Stomach (tissue), 19 donors: ENCODE measurements at regions of chr5 and their contacts with region 1.

Region 1: DNA sequence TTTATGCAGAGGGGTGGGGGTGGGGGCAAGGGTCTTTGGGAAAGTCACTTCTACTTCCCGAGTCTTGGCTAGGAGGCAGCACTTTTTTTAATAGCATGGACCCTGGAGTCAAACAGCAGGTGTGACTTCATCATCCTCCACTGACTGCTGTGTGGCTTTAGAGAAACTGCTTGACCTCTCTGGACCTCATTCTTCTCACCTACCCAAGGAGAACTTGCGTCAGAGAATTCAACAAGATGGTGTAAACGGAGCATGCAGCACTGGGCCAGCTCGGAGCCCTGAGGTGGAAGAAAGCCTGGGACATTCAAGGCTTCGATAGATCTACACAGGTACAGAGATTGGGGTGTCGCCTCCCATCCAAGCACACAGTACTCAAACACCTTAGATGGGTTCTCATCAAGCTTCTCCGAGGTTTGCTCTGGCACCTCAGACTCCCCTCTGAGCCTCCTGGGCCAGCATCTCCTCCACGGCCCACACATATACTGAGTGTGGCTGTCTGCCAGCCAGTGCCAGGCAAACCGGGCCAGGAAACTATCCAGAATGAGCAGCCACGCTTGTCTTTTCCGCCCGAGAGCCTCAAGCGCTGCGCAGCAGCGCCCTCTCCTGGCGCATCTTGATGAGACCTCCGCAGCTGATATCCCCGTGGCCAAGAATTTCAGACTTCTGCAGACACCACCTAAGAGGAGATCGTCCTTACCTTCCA is 4.6 kb upstream of the SLC25A48 start:
- DNase-seq: peak; percentile 63 to 83
- H3K4me3 ChIP-seq: no peak overlapping the region
- H3K27ac ChIP-seq: no peak overlapping the region
- H3K4me1 ChIP-seq: peaks cover 6 to 16% (median 9%) of the 10 kb centered on the region in 4 donors
- H3K27me3 ChIP-seq: peaks cover 4 to 54% (median 27%) of the 10 kb centered on the region in 3 donors
- CTCF ChIP-seq: peak in 5 of 7 experiments; percentile 6 to 60 (median 47)
- EP300 ChIP-seq: no peak
- POLR2A ChIP-seq: no peak

Region 2: GRCh38 chr5:135560858-135561257 is 269.0 kb before region 1 on chr5:
- intact Hi-C with region 1: loop called (anchors 5 kb)
- DNase-seq: peak; percentile 81 to 94
- H3K4me3 ChIP-seq: no peak overlapping the region
- H3K27ac ChIP-seq: no peak overlapping the region
- H3K4me1 ChIP-seq: peaks cover 0 to 8% (median 6%) of the 10 kb centered on the region in 4 donors
- H3K27me3 ChIP-seq: peaks cover 0 to 29% (median 5%) of the 10 kb centered on the region in 3 donors
- CTCF ChIP-seq: peak in 5 of 7 experiments; percentile 51 to 69 (median 67)
- EP300 ChIP-seq: no peak
- POLR2A ChIP-seq: no peak

Region 3: DNA sequence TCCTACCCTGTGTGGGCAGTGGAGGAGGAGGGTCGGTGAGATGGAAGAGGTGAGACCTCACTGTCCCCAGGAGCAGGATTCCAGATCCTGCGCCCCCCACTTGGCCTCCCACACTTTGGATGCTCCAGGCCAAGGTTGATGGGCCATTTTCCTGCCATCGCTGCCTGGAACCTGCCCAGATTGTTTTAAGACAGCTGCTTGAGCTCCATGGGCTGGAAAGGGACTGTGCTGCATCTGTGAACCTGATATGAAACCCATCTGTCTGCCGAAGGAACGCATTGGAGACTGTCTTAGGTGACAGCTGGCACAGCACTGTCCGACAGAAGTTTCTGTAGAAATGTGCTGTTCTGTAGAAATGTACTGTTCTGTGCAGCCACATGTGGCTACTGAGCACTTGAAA is 68.1 kb before region 1 on chr5:
- intact Hi-C with region 1: no loop called
- DNase-seq: no peak
- H3K4me3 ChIP-seq: no peak overlapping the region
- H3K27ac ChIP-seq: no peak overlapping the region
- H3K4me1 ChIP-seq: no peaks in the 10 kb centered on the region
- H3K27me3 ChIP-seq: peaks cover 0 to 28% (median 0%) of the 10 kb centered on the region in 3 donors
- CTCF ChIP-seq: no peak
- EP300 ChIP-seq: no peak
- POLR2A ChIP-seq: no peak

Region 4: DNA sequence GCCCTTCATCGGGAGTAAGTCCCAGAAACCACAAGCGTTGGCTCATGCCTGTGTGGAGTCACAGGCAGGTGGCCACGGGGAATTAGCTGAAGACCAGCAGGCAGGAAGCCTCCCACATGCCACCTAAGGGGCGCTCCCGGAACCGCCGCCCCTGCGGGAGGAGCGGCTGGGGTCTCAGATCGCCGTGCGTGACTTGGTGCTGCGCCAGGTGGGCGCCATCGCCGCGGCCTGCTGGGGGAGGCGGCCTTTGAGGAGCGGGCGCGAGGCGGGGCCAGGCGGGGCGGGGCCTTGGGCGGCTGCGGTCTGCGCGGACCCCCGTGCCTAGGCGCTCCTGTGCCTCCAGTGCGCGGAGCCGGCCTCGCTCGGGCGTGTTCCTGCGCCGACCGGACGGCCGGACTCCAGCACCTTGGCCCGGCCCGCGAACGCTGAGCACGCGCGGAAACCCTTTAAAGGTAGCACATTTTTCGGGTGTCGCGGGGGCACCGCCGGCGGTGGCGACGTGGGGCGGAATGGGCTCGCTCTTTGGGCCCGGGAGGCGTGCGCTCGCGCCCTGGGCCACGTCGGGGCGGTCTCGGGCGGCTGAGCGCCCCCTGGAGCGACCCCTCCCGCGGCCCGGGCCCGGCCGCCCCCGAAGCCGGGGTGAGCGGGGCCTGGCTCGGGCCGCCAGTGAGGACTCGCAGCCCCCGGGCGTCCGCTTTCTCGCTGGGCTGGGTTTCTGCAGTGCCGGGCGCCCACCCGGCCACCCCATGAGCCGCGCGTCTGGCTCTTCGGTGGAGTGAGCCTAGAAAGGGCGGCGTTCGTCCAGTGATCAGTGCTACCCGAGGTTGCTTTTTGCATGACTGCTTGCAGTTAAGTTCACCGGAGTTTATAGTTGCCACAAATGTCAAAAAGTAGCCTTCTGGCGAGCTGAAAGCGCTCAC is 100.5 kb after region 1 on chr5:
- intact Hi-C with region 1: no loop called
- DNase-seq: peak in 1 of 2 donors; percentile 44
- H3K4me3 ChIP-seq: peak overlapping the region; percentile 32 to 50 (median 40)
- H3K27ac ChIP-seq: no peak overlapping the region
- H3K4me1 ChIP-seq: peaks cover 10 to 13% (median 12%) of the 10 kb centered on the region in 4 donors
- H3K27me3 ChIP-seq: peaks cover 0 to 67% (median 26%) of the 10 kb centered on the region in 3 donors
- CTCF ChIP-seq: no peak
- EP300 ChIP-seq: no peak
- POLR2A ChIP-seq: no peak